GM12878 (cell line): ENCODE measurements at regions of chr11 and their contacts with region 1.

Region 1: GRCh38 chr11:12599408-12600143 is 74.6 kb upstream of the TEAD1 start:
- DNase-seq: peak; percentile 2
- ATAC-seq: peak; percentile 91
- H3K4me3 ChIP-seq: no peak overlapping the region
- H3K27ac ChIP-seq: no peak overlapping the region
- H3K4me1 ChIP-seq: no peaks in the 10 kb centered on the region
- H3K27me3 ChIP-seq: no peaks in the 10 kb centered on the region
- CTCF ChIP-seq: peak; percentile 72 to 94 (median 85)
- EP300 ChIP-seq: no peak
- POLR2A ChIP-seq: no peak
- RAD21 ChIP-seq: peak; percentile 55

Region 2: DNA sequence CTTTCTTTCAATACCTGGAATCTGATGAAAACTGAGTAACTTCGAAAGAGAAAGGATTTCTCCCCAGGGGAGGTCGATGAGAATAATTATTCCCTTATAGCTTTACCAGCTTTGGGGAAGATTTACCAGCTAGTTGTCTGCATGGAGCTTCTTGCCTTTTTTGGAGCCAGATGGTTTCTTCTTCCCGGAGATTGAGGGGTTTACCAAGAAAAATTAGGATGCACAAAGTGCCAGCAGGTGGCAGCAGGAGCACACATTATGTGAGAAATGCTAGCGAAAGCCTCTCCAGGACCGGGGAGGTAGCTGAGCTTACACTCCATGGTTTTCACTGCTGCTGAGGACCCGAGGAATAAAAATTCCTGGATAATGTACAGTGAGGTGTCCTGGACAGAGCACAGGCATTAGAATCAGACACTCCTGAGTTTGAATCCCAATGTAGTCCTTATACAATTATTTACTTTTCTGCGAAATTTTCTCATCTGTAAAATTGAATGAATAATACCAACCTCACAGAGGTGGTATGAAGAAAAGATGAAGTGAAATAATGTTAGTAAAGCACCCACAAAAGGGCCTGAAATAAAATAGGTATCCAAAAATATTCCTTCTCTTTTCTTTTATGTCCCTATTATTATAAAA is 268.2 kb before region 1 on chr11:
- CTCF ChIA-PET with region 1: interaction called, 9 read pairs
- POLR2A ChIA-PET with region 1: no interaction called
- RAD21 ChIA-PET with region 1: interaction called, 3 read pairs
- SMC1A ChIA-PET with region 1: no interaction called
- in situ Hi-C with region 1: no loop called
- intact Hi-C with region 1: loop called (anchors 10 kb)
- DNase-seq: peak; percentile 5
- ATAC-seq: peak; percentile 76
- H3K4me3 ChIP-seq: no peak overlapping the region
- H3K27ac ChIP-seq: no peak overlapping the region
- H3K4me1 ChIP-seq: no peaks in the 10 kb centered on the region
- H3K27me3 ChIP-seq: no peaks in the 10 kb centered on the region
- CTCF ChIP-seq: peak; percentile 67 to 84 (median 68)
- EP300 ChIP-seq: no peak
- POLR2A ChIP-seq: no peak
- RAD21 ChIP-seq: peak; percentile 81

Region 3: DNA sequence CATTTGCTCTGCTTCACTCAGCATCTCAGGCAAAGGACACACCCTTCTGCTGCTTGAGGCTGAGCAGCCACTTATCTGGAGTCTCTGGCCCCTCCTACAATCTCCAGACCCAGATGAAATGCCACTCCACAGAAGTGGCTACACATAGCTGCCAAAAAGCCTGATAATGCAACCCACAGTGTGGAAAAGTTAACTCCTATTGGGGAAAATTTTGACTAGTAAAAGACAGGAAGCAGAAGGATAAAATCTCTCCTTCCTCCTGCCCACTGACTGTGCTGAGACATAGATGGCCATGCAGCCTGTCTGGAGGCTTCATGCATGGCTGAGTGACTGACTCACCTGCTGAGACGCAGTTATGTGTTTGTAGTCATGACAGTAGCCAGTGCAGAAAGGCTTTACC is 17.7 kb before region 1 on chr11:
- CTCF ChIA-PET with region 1: interaction called, 10 read pairs
- POLR2A ChIA-PET with region 1: no interaction called
- RAD21 ChIA-PET with region 1: no interaction called
- SMC1A ChIA-PET with region 1: interaction called, 3 read pairs
- in situ Hi-C with region 1: no loop called
- intact Hi-C with region 1: no loop called
- DNase-seq: no peak
- ATAC-seq: peak; percentile 45; the same call in 2 of the 3 replicates
- H3K4me3 ChIP-seq: no peak overlapping the region
- H3K27ac ChIP-seq: no peak overlapping the region
- H3K4me1 ChIP-seq: no peaks in the 10 kb centered on the region
- H3K27me3 ChIP-seq: no peaks in the 10 kb centered on the region; a peak in 1 of 4 replicates
- CTCF ChIP-seq: no peak
- EP300 ChIP-seq: no peak
- POLR2A ChIP-seq: no peak
- RAD21 ChIP-seq: no peak

Region 4: DNA sequence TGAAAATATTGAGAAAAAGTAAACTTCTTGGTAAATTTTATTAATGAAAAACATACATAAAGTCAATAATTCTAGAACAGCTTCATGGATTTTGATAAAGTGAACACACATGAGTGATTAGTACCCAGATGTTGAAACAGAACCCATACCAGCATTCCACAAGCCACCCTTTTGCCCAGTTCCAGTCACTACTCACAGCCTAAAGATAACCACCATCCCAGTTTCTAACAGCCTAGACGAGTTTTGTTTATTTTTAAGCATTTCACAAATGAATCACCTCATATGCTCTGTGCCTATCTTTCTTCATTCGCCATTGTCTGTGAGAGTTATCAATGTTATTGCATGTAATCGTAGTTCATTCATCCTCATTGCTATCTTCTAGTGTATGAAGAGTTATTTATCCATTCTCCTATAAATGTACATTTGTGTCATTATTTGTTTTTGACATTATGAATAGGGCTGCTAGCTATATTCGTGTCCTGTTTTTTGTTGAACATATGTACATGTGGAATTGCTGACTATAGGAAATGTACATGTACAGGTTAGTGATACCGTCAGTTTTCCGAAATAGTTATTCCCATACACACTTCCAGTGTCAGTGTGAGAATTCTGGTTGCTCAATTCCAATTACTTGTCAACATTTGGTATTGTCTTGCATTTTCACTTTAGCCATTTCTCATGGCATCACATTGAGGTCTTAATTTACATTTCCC is 30.2 kb after region 1 on chr11:
- CTCF ChIA-PET with region 1: no interaction called
- POLR2A ChIA-PET with region 1: no interaction called
- RAD21 ChIA-PET with region 1: no interaction called
- SMC1A ChIA-PET with region 1: no interaction called
- in situ Hi-C with region 1: no loop called
- intact Hi-C with region 1: no loop called
- DNase-seq: no peak
- ATAC-seq: no peak
- H3K4me3 ChIP-seq: no peak overlapping the region
- H3K27ac ChIP-seq: no peak overlapping the region
- H3K4me1 ChIP-seq: no peaks in the 10 kb centered on the region
- H3K27me3 ChIP-seq: no peaks in the 10 kb centered on the region; a peak in 1 of 4 replicates
- CTCF ChIP-seq: no peak
- EP300 ChIP-seq: no peak
- POLR2A ChIP-seq: no peak
- RAD21 ChIP-seq: no peak

Region 5: DNA sequence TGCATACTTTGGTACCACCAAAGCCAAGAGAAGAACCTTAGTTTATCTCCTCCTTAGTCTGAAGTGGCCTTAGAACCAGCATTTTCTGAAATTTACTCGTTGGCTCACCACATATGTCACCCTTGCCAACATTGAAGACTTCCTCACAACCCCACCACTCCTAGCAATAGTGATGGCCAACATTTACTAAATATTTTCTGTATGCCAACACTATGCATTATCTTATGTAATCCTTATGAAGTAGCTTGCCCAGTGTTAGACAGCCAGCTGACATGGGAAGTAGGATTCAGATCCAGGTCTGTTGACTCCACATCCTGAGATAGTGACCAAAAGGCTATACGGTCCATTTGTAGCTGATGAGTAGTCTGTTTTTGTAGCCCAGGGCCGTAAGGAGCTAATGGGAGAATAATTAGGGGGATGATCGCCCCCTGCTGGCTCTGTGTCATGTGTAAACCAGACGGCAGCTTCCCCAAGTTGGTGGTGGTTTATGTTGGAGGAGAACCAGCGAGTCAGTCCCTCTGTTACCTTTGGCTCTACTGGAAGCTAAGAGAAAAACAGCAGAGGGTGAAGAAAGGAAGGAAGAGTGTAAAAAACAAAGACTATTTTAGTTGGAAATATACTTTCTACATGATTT is 289.1 kb after region 1 on chr11:
- CTCF ChIA-PET with region 1: interaction called, 86 read pairs
- POLR2A ChIA-PET with region 1: no interaction called
- RAD21 ChIA-PET with region 1: interaction called, 20 read pairs
- SMC1A ChIA-PET with region 1: interaction called, 28 read pairs
- in situ Hi-C with region 1: loop called (anchors 5 kb)
- intact Hi-C with region 1: no loop called
- DNase-seq: no peak
- ATAC-seq: peak; percentile 94
- H3K4me3 ChIP-seq: no peak overlapping the region
- H3K27ac ChIP-seq: no peak overlapping the region
- H3K4me1 ChIP-seq: no peaks in the 10 kb centered on the region
- H3K27me3 ChIP-seq: no peaks in the 10 kb centered on the region; a peak in 1 of 4 replicates
- CTCF ChIP-seq: peak; percentile 66 to 75 (median 73); a peak in 5 of 6 replicates
- EP300 ChIP-seq: no peak
- POLR2A ChIP-seq: no peak
- RAD21 ChIP-seq: peak; percentile 72

Region 6: DNA sequence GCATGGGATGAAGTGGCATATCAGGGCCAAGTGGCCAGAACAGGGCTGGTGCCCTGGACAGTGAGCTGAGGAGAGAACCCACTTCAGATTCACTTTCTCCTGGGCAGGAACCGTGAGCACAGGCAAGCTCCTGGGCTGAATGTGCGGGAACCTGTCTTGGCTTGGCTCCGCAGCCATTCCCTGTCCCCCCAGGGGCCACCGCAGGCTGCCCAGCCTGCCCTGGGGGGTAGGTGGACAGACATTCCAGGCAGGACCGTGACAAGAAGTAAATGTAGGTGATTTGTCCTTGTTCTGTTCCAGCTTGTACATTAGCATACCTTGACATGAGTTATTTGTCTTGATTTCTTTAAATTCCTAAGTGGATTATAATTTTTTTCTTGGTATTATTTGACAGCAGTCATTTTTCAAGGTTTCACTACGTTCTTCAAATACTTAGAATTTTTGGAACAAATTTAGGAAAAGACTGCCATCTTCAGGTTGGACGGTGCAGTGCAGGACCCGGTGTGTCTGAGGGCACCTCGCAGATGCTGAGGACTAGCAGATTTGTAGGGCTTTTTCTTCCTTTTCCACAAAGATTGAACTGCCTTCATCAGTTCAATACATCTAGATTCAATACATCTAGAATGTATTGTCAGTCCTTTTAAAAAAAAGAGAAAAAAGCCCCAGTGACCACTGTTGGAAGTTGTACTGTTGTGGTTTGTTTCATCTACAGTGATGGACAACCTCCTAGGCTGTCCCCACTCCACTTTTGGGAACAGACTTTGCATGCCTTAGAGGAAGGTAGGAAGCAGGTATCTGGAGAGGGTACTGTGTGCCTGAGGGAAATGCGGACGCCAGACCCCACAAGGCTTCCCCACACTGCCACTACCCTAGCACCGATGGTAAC is 294.5 kb after region 1 on chr11:
- CTCF ChIA-PET with region 1: interaction called, 86 read pairs
- POLR2A ChIA-PET with region 1: no interaction called
- RAD21 ChIA-PET with region 1: interaction called, 20 read pairs
- SMC1A ChIA-PET with region 1: interaction called, 28 read pairs
- in situ Hi-C with region 1: loop called (anchors 5 kb)
- intact Hi-C with region 1: loop called (anchors 1 kb)
- DNase-seq: no peak
- ATAC-seq: peak; percentile 80
- H3K4me3 ChIP-seq: no peak overlapping the region
- H3K27ac ChIP-seq: no peak overlapping the region
- H3K4me1 ChIP-seq: no peaks in the 10 kb centered on the region
- H3K27me3 ChIP-seq: no peaks in the 10 kb centered on the region; a peak in 2 of 4 replicates
- CTCF ChIP-seq: peak; percentile 51 to 70 (median 70)
- EP300 ChIP-seq: no peak
- POLR2A ChIP-seq: no peak
- RAD21 ChIP-seq: peak; percentile 62